Activated CD8-positive, alpha-beta T cell treated with anti-CD3 and anti-CD28 coated beads for 36 hours (primary cell): ENCODE measurements at regions of chr20 and their contacts with region 1.

Region 1: DNA sequence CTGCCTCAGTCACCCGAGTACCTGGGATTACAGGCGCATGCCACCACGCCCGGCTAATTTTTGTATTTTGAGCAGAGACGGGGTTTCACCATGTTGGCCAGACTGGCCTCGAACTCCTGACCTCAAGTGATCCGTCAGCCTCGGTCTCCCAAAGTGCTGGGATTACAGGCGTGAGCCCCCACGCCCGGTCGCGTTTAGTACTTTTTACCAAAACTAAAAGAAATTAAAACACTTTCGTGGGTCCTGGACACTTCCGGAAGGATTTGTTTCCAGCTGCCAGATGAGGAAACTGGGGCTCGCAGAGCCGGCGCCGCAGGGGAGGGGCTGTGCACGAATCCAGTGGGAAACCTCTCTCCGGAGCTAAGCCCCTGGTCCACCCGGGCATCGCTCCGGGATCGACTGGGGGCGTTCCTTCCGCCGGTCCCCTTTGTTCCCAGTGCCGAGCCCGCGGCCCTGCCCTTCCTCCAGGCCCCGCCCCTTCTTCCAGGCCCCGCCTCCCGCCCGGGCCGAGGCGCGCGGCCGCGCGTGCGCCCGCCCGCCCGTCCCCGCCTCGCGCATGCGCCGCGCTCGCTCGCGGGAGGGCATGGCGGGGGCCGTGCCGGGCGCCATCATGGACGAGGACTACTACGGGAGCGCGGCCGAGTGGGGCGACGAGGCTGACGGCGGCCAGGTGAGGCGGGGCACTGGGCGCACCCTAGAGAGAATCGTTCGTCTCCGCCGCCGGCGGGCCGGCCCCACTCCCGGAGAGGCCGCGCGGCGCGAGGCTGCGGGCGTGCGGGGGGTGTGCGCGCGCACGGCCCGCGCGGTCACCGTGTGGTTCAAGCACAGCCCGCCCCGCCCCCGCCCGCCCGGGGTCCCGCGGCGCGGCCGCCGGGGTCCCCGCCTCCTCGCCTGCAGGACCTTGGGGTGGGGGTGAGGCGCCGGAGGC is at the start of gene NELFCD:
- DNase-seq: peak; percentile 87
- ATAC-seq: peak; percentile 89
- H3K4me3 Mint-ChIP-seq: peak within 1 kb of the TSS; percentile 94
- H3K27ac Mint-ChIP-seq: peak within 1 kb of the TSS; percentile 93
- H3K4me1 Mint-ChIP-seq: peaks cover 29% of the 10 kb centered on the region
- H3K27me3 Mint-ChIP-seq: no peaks in the 10 kb centered on the region
- CTCF ChIP-seq: no peak
- total RNA-seq, gene NELFCD: 106 to 120 TPM

Region 2: GRCh38 chr20:58888521-58889333 is 92.2 kb before region 1 on chr20:
- CTCF ChIA-PET with region 1: no interaction called
- POLR2A ChIA-PET with region 1: interaction called, 5 read pairs
- intact Hi-C with region 1: loop called (anchors 5 kb)
- DNase-seq: peak; percentile 89
- ATAC-seq: peak; percentile 51
- H3K4me3 Mint-ChIP-seq: peak overlapping the region; percentile 77
- H3K27ac Mint-ChIP-seq: peak overlapping the region; percentile 81
- H3K4me1 Mint-ChIP-seq: peaks cover 22% of the 10 kb centered on the region
- H3K27me3 Mint-ChIP-seq: no peaks in the 10 kb centered on the region
- CTCF ChIP-seq: no peak

Region 3: GRCh38 chr20:58993332-58994201 is 12.6 kb after region 1 on chr20:
- CTCF ChIA-PET with region 1: interaction called, 4 read pairs
- POLR2A ChIA-PET with region 1: interaction called, 13 read pairs
- intact Hi-C with region 1: no loop called
- DNase-seq: no peak
- ATAC-seq: no peak
- H3K4me3 Mint-ChIP-seq: no peak overlapping the region
- H3K27ac Mint-ChIP-seq: peak overlapping the region; percentile 49
- H3K4me1 Mint-ChIP-seq: no peaks in the 10 kb centered on the region
- H3K27me3 Mint-ChIP-seq: no peaks in the 10 kb centered on the region
- CTCF ChIP-seq: no peak

Region 4: GRCh38 chr20:59007665-59008511 is 26.9 kb after region 1 on chr20:
- CTCF ChIA-PET with region 1: no interaction called
- POLR2A ChIA-PET with region 1: interaction called, 11 read pairs
- intact Hi-C with region 1: no loop called
- DNase-seq: peak; percentile 42
- ATAC-seq: no peak
- H3K4me3 Mint-ChIP-seq: peak overlapping the region; percentile 61
- H3K27ac Mint-ChIP-seq: peak overlapping the region; percentile 67
- H3K4me1 Mint-ChIP-seq: peaks cover 36% of the 10 kb centered on the region
- H3K27me3 Mint-ChIP-seq: no peaks in the 10 kb centered on the region
- CTCF ChIP-seq: no peak